ENCODE measurements at regions of chr18 and their contacts with region 1.

Region 1: GRCh38 chr18:22658318-22658717 is 240.6 kb upstream of the CTAGE1 start:
- DNase-seq: no peak
- H3K4me3 ChIP-seq: no peak overlapping the region
- H3K27ac ChIP-seq: no peak overlapping the region
- H3K4me1 ChIP-seq: no peaks in the 10 kb centered on the region
- H3K27me3 ChIP-seq: no peaks in the 10 kb centered on the region
- CTCF ChIP-seq: no peak

Region 2: GRCh38 chr18:21571772-21572171 is 1086.5 kb before region 1 on chr18:
- intact Hi-C with region 1: loop called (anchors 5 kb)
- DNase-seq: no peak
- H3K4me3 ChIP-seq: no peak overlapping the region
- H3K27ac ChIP-seq: peak overlapping the region in 1 of 2 donors; percentile 60
- H3K4me1 ChIP-seq: peaks cover 0 to 33% (median 7%) of the 10 kb centered on the region in 4 donors
- H3K27me3 ChIP-seq: no peaks in the 10 kb centered on the region
- CTCF ChIP-seq: no peak

Measured in tibial artery (tissue), 4 donors.